ENCODE measurements at regions of chr1 and their contacts with region 1.

Region 1: DNA sequence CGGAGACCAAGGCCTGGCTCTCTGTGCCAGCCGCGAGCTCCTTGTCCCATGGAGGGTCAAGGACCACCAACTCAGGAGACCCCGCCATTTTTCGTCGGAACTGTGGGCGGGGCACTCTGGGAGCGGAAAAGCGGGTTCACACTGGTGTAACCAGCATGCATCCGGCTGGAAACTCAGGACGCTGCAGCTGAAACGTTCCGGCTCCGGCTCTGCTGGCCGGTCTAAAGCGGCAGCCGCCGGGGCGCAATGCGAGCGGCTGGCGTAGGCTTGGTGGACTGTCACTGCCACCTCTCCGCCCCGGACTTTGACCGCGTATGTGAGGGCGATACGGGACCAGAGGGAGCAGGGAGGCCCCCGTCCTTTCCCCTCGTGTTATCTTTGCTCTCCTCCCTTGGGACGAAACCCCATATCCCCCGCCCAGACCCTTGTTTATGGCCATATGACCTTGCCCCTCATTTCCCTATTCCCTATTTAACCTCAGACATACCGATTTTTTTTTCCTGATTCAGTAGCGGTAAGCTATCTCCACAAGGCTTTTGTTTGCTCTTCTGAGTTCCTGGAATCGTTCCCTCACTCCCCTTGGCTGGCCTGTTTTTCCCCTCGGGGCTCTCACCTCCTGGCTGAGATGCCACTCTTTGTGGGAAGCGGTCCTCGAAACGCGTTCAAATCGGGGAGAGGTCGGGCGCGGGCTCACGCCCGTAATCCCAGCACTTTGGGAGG is at the starts of genes NSL1 and TATDN3:
- DNase-seq: peak; percentile 81 to 99 (median 93)
- ATAC-seq: peak; percentile 87
- H3K4me3 Mint-ChIP-seq: peak within 1 kb of the TSS; percentile 88 to 99 (median 96)
- H3K27ac Mint-ChIP-seq: peak within 1 kb of the TSS; percentile 81 to 98 (median 95)
- H3K4me1 Mint-ChIP-seq: peaks cover 22 to 59% (median 34%) of the 10 kb centered on the region in 4 donors
- H3K27me3 Mint-ChIP-seq: peaks cover 0 to 1% (median 0%) of the 10 kb centered on the region in 5 donors
- polyA plus RNA-seq, gene NSL1: 54.8 to 74.2 (median 65.3) TPM
- polyA plus RNA-seq, gene TATDN3: 15.6 to 20.8 (median 18.0) TPM

Region 2: DNA sequence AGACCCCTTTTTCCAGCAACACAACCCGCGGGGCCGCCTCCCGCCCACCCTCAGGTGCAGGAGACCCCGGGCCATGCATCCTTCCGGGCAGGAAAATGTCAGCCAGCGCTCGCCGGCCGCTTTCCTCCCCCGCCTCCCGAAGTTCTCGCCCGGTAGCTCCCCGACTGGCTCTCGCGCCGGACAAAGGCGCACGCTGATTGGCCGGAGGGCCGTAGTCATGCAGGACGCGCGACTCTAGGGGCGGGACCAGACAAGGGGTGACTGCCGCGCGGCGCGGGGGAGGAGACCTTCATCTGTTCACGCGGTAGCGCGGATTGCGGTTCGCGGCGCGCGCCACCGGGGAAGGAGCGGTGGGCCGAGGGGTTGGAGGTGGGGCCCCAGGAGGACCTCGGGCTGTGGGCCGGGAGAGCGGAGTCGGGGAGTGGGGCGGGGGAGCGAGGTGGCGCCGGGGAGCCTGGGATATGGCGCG is 66.2 kb after region 1 on chr1 and contains the start of gene FLVCR1:
- POLR2A ChIA-PET with region 1: interaction called, 11 read pairs
- DNase-seq: peak; percentile 66 to 93 (median 84)
- ATAC-seq: peak; percentile 95 to 97
- H3K4me3 Mint-ChIP-seq: peak within 1 kb of the TSS in 8 of 10 donors; percentile 87 to 98 (median 94)
- H3K27ac Mint-ChIP-seq: peak within 1 kb of the TSS; percentile 85 to 97 (median 93)
- H3K4me1 Mint-ChIP-seq: peaks cover 17 to 38% (median 30%) of the 10 kb centered on the region in 4 donors
- H3K27me3 Mint-ChIP-seq: no peaks in the 10 kb centered on the region
- polyA plus RNA-seq, gene FLVCR1: 1.1 to 1.9 (median 1.2) TPM

Measured in naive thymus-derived CD8-positive, alpha-beta T cell (primary cell).